ENCODE measurements at regions of chr18 and their contacts with region 1.

Region 1: GRCh38 chr18:21612125-21612991 is at the start of gene SNRPD1:
- DNase-seq: peak; percentile 83
- ATAC-seq: peak; percentile 98
- H3K4me3 ChIP-seq: peak within 1 kb of the TSS; percentile 69 to 100
- H3K27ac ChIP-seq: peak within 1 kb of the TSS; percentile 89
- H3K4me1 ChIP-seq: peaks cover 4 to 25% of the 10 kb centered on the region in 2 experiments; a peak in 2 of 4 replicates
- H3K27me3 ChIP-seq: no peaks in the 10 kb centered on the region
- CTCF ChIP-seq: peak; percentile 64 to 97 (median 92)
- POLR2A ChIP-seq: peak; percentile 86
- RAD21 ChIP-seq: peak; percentile 16; the same call in 1 of the 2 replicates
- total RNA-seq, gene SNRPD1: 134 TPM

Region 2: DNA sequence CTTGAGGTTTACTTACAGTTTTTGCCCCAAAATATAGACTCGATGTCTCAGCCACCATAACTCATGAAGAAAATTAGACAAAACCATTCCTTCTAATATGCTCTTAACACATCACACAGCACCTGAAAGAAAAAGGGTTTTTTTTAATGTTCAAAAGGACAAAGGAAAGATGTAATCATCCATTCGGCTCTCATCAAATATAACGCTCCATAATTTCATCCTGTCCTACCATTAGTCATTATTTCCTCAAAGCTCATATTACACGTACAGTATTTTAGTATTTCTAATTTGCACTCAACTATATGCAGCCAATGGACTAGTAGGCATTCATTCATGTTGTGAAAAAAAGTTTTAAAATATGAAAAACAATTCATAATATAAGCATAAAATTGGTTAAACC is 36.7 kb before region 1 on chr18:
- CTCF ChIA-PET with region 1: no interaction called
- POLR2A ChIA-PET with region 1: no interaction called
- RAD21 ChIA-PET with region 1: no interaction called
- intact Hi-C with region 1: no loop called
- DNase-seq: no peak
- ATAC-seq: no peak
- H3K4me3 ChIP-seq: no peak overlapping the region
- H3K27ac ChIP-seq: no peak overlapping the region
- H3K4me1 ChIP-seq: no peaks in the 10 kb centered on the region
- H3K27me3 ChIP-seq: no peaks in the 10 kb centered on the region
- CTCF ChIP-seq: no peak
- POLR2A ChIP-seq: no peak
- RAD21 ChIP-seq: no peak

Region 3: DNA sequence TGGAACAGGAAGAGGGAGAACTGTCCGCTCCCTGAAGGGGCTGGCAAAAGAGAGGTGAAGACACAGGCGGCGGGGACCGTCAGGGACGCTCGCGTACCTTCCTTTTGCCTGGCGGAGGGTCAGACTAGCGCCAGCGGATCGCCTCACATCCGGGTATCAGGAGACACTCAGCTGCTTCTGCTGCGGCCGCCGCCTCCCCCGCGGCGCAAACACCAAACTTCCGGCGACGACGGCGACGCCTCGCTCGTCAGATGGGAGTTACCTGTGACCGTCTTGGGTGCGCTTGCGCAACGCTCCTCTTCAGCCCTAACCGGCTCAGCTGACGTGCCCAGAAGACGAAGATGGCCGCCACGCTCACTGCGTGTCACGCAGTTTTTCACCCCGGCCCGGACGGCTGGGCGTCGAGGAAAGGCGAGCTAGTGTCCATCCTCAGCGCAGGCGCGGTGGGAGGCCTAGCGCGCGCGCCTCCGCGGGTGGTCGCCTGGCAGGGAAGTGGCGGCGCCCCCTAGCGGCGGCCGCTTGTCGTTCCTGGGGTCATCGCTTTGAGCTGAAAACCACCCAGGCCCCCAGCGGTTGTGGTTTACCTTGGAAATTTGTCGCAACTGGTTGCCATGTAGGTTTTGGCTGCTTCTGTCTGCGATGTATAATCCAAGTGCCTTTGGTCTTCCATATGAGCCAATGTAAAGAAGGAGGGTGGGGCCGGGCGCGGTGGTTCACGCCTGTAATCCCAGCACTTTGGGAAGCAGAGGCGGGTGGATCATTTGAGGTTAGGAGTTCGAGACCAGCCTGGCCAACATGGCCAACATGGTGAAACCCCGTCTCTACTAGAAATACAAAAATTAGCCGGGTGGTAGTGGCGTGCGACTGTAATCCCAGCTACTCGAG is 11.6 kb before region 1 on chr18 and contains the start of gene ESCO1:
- CTCF ChIA-PET with region 1: interaction called, 66 read pairs
- POLR2A ChIA-PET with region 1: interaction called, 26 read pairs
- RAD21 ChIA-PET with region 1: no interaction called
- intact Hi-C with region 1: loop called (anchors 1 kb)
- DNase-seq: peak; percentile 99
- ATAC-seq: peak; percentile 91
- H3K4me3 ChIP-seq: peak within 1 kb of the TSS; percentile 84 to 99
- H3K27ac ChIP-seq: peak within 1 kb of the TSS; percentile 100
- H3K4me1 ChIP-seq: peaks cover 7 to 13% of the 10 kb centered on the region in 2 experiments
- H3K27me3 ChIP-seq: no peaks in the 10 kb centered on the region
- CTCF ChIP-seq: peak in 2 of 3 experiments; percentile 67 to 81; a peak in 4 of 6 replicates
- POLR2A ChIP-seq: no peak
- RAD21 ChIP-seq: no peak
- total RNA-seq, gene ESCO1: 19.6 TPM

Region 4: GRCh38 chr18:21740724-21741510 is 128.6 kb after region 1 on chr18 and contains the start of gene MIB1:
- CTCF ChIA-PET with region 1: no interaction called
- POLR2A ChIA-PET with region 1: no interaction called
- RAD21 ChIA-PET with region 1: no interaction called
- intact Hi-C with region 1: loop called (anchors 5 kb)
- DNase-seq: peak; percentile 89
- ATAC-seq: peak; percentile 78
- H3K4me3 ChIP-seq: peak within 1 kb of the TSS; percentile 77 to 80
- H3K27ac ChIP-seq: peak within 1 kb of the TSS; percentile 92
- H3K4me1 ChIP-seq: peaks cover 11 to 21% of the 10 kb centered on the region in 2 experiments
- H3K27me3 ChIP-seq: no peaks in the 10 kb centered on the region
- CTCF ChIP-seq: no peak
- POLR2A ChIP-seq: peak; percentile 67
- RAD21 ChIP-seq: no peak
- total RNA-seq, gene MIB1: 56.1 TPM

Measured in HCT116 (cell line).